ENCODE measurements at regions of chr2 and their contacts with region 1.

Region 1: DNA sequence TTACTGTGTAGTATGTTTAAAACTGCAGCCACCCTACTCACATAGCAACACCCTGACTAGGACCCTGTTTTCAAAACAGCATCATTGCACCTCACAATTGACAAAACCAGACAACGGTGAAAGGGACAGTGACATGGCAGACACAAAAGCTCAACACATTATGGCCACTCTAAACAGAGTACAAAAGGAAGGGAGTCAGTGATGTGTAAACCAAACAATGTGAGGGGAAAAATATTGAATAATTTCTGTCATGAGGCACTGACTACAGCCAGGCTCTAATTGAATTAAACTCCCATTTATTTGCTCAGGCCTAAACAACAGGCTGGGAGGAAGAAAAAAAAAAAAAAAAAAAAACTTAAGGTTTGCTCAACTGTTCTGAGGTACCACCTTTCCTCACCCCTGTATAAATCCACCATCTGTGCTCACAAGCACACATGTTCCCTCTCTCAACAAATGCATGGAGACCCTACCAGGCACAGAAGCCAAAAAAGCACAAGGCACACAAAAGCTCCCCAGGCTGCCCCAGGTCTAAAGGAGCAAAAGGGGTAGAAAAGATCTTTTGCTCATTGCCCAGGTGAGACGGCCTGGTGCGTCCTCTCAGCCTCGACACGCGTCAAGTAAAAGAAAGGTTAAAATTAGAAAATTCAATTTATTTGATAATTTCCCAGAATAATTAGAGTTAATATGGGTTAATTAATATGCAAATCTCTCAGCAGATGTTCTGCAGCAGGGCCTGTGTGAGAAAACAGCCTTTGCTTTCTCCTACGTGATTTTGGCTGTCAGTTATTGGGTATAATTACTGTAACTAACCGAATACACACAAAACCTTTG is 80.9 kb downstream of the ZEB2 start:
- DNase-seq: no peak

Region 2: DNA sequence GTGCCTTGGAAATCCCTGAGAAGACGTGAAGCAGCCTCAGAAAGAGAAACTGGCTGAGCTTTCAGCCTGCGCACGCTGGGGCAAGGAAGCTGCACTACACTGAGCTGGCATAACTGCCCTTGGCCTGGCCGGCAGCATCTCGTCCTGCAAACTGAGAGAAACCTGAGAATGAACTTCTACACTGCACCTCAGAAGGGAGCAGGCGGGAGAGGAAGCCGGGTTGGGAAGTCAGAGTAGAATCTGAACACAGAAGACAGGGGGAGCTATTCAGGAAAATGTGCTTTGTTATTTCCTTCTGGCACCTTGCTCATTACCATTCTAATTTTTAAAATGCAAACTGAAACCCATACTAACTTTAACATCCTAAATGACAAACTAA is 10.0 kb after region 1 on chr2:
- CTCF ChIA-PET with region 1: interaction called, 10 read pairs
- POLR2A ChIA-PET with region 1: no interaction called
- DNase-seq: peak; percentile 48

Region 3: DNA sequence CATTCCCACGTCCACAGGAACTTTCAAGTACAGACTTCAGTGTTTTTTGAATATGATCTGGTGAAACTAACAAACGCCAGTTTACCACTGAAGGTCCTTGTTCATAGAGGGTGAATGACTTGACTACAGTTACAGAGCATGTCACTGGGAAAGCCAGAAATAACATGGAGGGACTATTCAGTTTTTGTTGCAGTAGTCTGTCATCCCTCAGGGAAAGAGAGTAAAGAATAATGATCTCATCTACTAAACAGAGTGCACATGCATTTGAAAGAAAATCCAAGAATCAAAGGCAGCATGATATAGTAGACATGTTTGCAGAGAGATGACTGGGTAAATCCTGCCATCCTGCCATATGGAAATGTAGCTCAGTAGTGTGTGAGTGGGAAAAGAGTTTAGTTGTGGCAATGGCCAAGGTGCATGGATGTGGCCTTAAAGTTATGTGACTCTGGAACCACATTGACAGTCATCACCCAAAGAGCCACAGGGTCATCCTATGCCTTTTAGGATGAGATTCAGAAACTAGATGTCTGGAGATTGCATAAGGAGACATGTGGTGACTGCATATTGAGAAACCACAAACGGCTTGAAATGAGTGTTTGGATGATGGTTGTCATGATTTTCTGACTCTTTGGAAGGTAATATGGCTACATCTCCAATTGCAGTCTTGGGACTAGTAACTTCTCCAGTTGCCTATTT is 206.2 kb after region 1 on chr2:
- CTCF ChIA-PET with region 1: no interaction called
- POLR2A ChIA-PET with region 1: no interaction called
- DNase-seq: no peak

Measured in HEK293T (cell line).